Dendritic cell treated with granulocyte-macrophage colony-stimulating factor and Interleukin-4, amounts not matched to agents 40 ng/mL and 50 ng/mL, for 4 days (primary cell): ENCODE measurements at regions of chr17 and their contacts with region 1.

Region 1: GRCh38 chr17:69150333-69150732 is 8.6 kb upstream of the ABCA6 start:
- H3K4me3 Mint-ChIP-seq: no peak overlapping the region
- H3K27ac Mint-ChIP-seq: no peak overlapping the region
- H3K4me1 Mint-ChIP-seq: peaks cover 15% of the 10 kb centered on the region
- H3K27me3 Mint-ChIP-seq: no peaks in the 10 kb centered on the region

Region 2: GRCh38 chr17:69192754-69193153 is 42.4 kb after region 1 on chr17:
- intact Hi-C with region 1: loop called (anchors 5 kb)
- H3K4me3 Mint-ChIP-seq: no peak overlapping the region
- H3K27ac Mint-ChIP-seq: no peak overlapping the region
- H3K4me1 Mint-ChIP-seq: peaks cover 5% of the 10 kb centered on the region
- H3K27me3 Mint-ChIP-seq: no peaks in the 10 kb centered on the region